ENCODE measurements at regions of chr5 and their contacts with region 1.

Region 1: DNA sequence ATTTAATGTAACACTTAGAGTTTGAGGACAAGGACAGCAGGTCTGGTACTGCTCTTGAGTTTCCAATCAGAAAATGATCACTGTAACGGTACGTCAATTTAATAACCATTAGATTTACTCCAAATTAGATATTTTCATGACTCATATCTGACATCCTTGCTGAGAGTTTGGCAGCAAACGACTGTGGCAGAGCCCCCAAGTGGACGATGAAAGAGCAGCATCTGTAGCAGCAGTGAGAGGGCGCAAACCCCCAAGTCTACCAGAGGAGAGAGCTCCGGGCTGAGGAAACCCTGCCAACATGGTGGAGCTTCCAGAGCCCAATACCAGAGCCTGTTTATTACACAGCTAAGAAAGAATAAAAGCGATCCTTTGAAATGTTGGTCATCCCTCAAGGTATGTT is 73.2 kb upstream of the EPB41L4A start:
- DNase-seq: peak; percentile 76
- H3K27ac ChIP-seq: no peak overlapping the region
- CTCF ChIP-seq: peak; percentile 56

Region 2: DNA sequence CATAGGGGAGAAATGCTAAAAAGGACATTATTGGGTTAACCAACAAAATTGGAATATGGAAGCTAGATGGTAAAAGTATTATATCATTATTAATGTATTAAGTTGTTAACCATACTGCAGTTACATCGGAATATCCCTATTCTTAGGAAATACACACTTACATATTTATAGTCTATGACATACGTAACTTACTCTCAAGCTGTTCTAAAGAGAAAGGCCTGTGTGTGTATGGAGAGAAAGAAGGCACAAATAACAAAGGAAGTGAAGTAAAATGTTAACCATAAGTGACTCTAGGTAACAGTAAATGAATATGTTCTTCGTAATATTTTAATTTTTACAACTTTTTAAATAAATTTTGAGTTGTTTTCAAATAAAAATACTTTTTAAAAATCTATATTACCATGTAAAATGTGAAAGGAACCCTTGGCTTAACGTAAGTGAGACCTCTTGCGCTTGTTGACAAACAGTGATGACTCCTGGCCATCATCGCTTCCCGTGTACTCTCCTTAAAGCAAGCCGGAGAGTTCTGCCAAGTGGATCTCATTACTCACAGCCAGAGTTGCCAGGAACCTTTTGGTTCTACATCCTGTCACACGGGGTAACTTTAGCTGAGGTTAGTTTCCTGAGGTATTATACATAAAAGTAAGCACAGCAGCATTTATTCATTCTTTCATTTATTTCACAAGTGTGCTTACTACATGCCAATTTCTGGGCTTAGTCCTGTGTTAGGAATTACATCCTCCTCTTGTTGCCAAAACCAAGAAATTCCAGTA is 238.6 kb before region 1 on chr5:
- CTCF ChIA-PET with region 1: no interaction called
- POLR2A ChIA-PET with region 1: no interaction called
- DNase-seq: peak; percentile 60
- H3K27ac ChIP-seq: peak overlapping the region; percentile 87
- CTCF ChIP-seq: no peak

Region 3: GRCh38 chr5:112379542-112380325 is 112.6 kb before region 1 on chr5:
- CTCF ChIA-PET with region 1: no interaction called
- POLR2A ChIA-PET with region 1: no interaction called
- DNase-seq: no peak
- H3K27ac ChIP-seq: no peak overlapping the region
- CTCF ChIP-seq: no peak

Region 4: DNA sequence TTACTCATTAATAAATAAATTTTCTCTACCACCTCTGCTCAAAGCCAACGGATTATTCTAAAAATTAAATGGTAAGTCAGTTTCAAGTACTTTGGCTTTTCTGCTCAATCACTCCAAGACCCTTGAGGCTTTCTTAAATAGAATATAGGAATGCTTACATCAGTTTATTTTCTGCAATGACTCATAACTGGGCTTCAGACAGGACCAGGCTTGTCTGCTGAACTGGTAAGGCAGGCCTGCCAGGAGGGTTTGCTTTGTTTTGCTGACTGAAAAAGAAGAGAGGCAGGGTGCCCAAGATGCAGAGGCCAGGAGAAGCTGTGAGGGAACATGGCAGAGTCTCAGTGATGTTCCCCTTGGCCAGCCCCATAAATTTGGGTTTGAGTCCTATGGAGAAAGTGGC is 12.9 kb before region 1 on chr5:
- CTCF ChIA-PET with region 1: interaction called, 10 read pairs
- POLR2A ChIA-PET with region 1: no interaction called
- DNase-seq: peak; percentile 88
- H3K27ac ChIP-seq: no peak overlapping the region
- CTCF ChIP-seq: no peak

Region 5: DNA sequence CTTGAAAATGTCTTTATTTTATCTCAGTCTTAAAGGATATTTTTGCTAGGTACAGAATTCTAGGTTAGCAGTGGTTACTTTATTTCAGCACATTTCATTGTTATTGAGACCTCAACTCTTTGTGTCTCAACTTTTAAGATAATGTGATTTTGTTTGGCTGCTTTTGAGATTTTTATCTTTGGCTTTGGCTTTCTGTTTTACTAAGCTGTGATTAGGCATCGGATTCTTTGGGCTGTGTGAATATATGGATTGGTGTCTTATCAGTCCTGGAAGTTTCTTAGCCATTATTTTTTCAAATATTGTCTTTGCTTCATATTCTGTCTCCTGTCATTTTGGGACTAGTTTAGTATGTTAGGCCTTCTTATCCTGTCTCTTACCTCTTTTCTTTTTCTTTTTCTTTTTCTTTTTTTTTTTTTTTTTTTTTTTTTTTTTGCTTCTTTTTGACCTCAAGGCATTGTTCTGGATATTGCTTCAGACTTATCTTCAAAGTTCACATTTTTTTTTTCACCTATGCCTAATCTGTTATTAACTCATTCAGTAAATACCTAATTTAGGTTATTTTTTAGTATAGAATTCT is 225.3 kb after region 1 on chr5:
- CTCF ChIA-PET with region 1: no interaction called
- POLR2A ChIA-PET with region 1: no interaction called
- DNase-seq: no peak
- H3K27ac ChIP-seq: no peak overlapping the region
- CTCF ChIP-seq: no peak